ENCODE measurements at regions of chr2 and their contacts with region 1.

Region 1: DNA sequence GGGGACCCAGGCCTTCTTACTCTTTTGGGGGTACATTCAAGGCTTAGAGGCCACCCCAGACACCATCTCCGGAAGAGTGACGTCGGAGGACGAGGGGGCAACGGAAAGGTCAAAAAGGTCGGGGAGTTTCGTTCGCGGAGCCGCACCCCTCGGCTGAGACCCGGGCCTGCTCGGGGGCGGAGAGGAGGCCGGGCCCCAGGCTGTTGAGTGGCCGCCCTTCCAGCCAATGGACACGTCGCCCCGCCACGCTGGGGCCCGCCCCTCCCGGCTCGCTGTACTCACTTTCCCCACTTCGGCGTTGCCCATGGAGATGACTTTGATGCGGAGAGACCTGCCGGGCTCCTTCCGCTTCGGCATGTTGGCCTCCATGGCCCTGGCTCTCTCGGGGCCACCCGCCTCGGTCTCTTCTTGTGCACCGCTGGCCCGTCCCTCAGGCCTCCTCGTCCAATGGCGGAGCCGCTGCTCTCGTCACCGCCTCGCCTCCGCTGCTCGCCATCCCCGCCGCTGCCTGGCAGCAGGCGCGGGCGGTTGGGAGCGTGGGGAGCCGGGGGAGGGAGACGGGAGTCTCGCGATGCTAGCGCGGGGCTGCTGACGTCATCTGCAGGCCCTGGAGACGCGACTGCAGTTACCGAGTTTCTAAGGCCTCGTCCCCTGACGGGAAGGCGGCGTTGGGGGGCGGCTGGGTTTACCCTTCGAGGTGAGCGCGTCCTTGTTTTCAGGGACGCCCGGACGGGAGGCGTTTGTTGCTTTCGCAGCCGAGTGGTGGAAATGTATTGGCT is at the start of gene DNAJC27:
- DNase-seq: peak; percentile 89 to 96
- H3K4me3 ChIP-seq: peak within 1 kb of the TSS; percentile 95
- H3K27ac ChIP-seq: peak within 1 kb of the TSS; percentile 86
- H3K4me1 ChIP-seq: peaks cover 18% of the 10 kb centered on the region
- H3K27me3 ChIP-seq: no peaks in the 10 kb centered on the region
- CTCF ChIP-seq: no peak
- total RNA-seq, gene DNAJC27: 5.1 and 6.3 TPM in 2 replicates

Region 2: DNA sequence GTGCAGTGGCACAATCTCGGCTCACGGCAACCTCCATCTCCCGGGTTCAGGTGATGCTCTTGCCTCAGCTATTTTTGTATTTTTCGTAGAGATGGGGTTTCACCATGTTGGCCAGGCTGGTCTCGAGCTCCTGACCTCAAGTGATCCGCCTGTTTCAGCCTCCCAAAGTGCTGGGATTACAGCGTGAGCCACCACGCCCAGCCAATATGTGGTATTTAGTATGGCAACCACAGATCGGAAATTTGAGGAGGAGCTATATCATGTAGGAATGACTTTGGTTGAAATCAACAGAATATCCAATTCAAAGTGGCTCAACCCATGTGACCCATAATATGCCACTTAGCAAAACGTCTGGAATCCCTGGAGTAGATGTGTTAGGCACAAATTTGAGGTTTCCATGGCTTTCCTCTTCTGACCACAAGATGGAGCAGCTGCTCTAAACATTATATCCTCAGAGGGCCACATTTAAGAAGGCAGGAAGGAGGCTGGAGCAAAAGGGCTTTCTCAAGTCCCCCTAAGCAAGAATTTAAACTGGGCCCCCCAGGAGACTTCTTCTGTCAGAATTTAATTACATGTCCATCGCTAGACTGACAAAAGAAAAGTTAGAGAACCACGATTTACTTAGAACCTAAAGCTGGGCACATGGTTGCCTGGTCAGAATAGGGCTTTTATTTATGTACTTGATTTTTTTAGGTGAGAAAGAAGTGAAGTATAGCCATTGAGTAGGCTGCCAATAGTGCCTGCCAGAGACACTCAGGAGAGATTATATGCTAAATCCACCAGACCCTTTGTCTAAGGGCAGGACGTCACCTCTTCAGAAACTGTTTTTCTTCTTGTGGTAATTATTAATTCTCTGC is 561.8 kb before region 1 on chr2:
- CTCF ChIA-PET with region 1: no interaction called
- POLR2A ChIA-PET with region 1: no interaction called
- intact Hi-C with region 1: loop called (anchors 5 kb)
- DNase-seq: peak; percentile 38 to 58
- H3K4me3 ChIP-seq: no peak overlapping the region
- H3K27ac ChIP-seq: no peak overlapping the region
- H3K4me1 ChIP-seq: peaks cover 11% of the 10 kb centered on the region
- H3K27me3 ChIP-seq: no peaks in the 10 kb centered on the region
- CTCF ChIP-seq: peak; percentile 92

Region 3: DNA sequence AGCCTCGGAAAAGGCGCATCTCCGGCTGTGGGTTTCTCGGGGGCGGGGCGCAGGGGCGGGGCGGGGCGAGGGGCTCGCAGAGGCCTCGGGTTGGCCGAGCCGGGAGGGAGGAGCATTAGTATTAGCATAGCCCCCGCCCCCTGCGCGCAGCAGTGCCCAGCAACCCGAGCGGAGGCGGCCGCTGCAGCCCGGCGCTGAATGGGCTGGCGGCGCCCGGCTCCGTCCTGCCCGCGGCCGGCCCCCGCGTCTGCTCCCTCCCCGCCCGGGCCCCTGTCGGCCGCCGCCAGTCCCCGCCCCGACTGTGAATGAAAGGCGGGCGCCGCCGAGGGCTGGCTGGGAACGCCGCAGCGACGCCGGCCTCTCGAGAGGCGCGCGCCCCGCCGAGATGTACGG is 70.2 kb after region 1 on chr2 and contains the start of gene EFR3B:
- CTCF ChIA-PET with region 1: no interaction called
- POLR2A ChIA-PET with region 1: no interaction called
- intact Hi-C with region 1: loop called (anchors 1 kb)
- DNase-seq: peak; percentile 83 to 94
- H3K4me3 ChIP-seq: peak within 1 kb of the TSS; percentile 75
- H3K27ac ChIP-seq: no peak within 1 kb of the TSS
- H3K4me1 ChIP-seq: peaks cover 32% of the 10 kb centered on the region
- H3K27me3 ChIP-seq: peaks cover 32% of the 10 kb centered on the region
- CTCF ChIP-seq: no peak
- total RNA-seq, gene EFR3B: 0.20 TPM in 1 of 2 replicates, not detected in the other

Region 4: GRCh38 chr2:25131567-25132298 is 160.0 kb after region 1 on chr2:
- CTCF ChIA-PET with region 1: interaction called, 39 read pairs
- POLR2A ChIA-PET with region 1: no interaction called
- intact Hi-C with region 1: loop called (anchors 1 kb)
- DNase-seq: no peak
- H3K4me3 ChIP-seq: no peak overlapping the region
- H3K27ac ChIP-seq: no peak overlapping the region
- H3K4me1 ChIP-seq: no peaks in the 10 kb centered on the region
- H3K27me3 ChIP-seq: peaks cover 61% of the 10 kb centered on the region
- CTCF ChIP-seq: no peak

Region 5: DNA sequence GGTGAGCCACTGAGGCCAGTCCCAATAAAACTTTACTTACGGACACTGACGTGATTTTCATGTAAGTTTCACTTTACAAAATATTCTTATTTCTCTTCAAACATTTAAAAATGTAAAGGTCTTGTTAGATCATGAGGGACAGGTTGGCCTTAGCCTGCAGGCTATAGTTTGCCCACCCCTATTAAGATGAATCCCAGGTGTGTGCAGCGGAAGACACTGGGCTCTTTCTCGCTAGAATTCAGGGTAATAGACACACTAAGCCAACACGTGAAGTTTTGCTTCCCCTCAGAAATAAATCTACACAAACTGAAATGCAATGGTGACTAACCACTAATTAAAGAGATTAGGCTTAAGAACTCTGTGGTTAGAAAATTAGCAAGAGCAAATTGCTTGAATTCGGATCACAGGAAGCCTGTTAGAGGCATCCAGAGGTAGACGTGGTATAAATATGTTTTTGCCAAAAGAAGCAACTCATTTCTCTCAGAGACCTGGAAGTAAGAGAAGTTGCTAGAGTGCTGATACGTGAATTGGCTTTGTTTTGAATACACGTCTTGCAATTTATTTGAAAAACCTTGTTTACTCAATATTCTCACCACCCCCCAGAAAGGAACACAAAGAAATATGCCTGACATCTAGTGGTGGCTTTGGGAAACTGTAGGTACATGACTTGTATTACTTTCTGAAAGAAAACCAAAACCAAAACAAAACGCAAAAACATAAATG is 550.1 kb after region 1 on chr2:
- CTCF ChIA-PET with region 1: no interaction called
- POLR2A ChIA-PET with region 1: no interaction called
- intact Hi-C with region 1: loop called (anchors 5 kb)
- DNase-seq: peak; percentile 15 to 63
- H3K4me3 ChIP-seq: no peak overlapping the region; the same call in 1 of the 2 replicates
- H3K27ac ChIP-seq: no peak overlapping the region
- H3K4me1 ChIP-seq: peaks cover 4% of the 10 kb centered on the region
- H3K27me3 ChIP-seq: no peaks in the 10 kb centered on the region
- CTCF ChIP-seq: peak; percentile 89

Measured in PC-9 (cell line).